B cell (primary cell): ENCODE measurements at regions of chr11 and their contacts with region 1.

Region 1: GRCh38 chr11:62108017-62108750 is 15.6 kb upstream of the INCENP start:
- DNase-seq: peak; percentile 80
- ATAC-seq: peak; percentile 63
- H3K4me3 ChIP-seq: no peak overlapping the region
- H3K4me3 Mint-ChIP-seq: no peak overlapping the region
- H3K27ac ChIP-seq: no peak overlapping the region
- H3K27ac Mint-ChIP-seq: no peak overlapping the region
- H3K4me1 ChIP-seq: peaks cover 0 to 12% of the 10 kb centered on the region in 2 donors
- H3K4me1 Mint-ChIP-seq: peaks cover 9% of the 10 kb centered on the region
- H3K27me3 ChIP-seq: peaks cover 0 to 3% (median under 1%) of the 10 kb centered on the region in 4 experiments
- H3K27me3 Mint-ChIP-seq: no peaks in the 10 kb centered on the region
- CTCF ChIP-seq: peak; percentile 83

Region 2: DNA sequence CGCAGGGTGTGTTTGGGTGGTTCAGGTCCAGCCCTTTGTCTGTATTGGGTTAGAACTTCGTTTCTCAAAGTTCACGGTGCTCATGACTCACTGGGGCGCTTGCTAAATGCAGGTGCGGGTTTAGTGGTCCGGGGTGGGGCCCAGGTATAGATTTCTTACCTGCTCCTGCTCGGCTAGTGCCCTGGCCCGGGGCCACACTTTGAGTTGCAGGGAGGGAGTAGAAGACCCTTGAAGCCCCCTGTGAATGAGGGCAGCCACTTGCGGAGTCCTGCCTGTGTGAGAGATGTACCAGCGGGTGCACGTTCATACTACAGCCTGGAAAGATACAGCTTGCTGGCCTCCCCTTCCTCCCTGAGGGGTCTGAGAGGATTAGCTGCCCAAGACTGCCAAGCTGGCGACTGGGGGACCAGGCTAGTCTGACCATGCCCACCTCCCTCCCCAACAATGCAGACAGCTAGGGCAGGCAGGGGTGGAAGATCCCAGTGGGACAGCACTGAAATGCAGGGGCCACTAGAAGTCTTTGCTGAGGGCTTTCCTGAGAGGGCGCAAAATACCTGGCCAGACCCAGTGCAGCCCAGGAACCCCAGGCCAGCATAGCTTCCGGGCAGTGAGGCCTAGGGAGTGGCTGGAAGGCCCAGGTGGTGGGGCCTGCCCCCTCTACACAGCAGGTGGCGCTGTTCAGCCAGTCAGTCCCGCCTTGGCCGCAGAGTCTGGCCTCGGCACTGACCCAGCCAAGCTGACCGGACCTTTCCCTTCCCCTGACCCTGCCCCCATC is 360.8 kb before region 1 on chr11:
- CTCF ChIA-PET with region 1: interaction called, 69 read pairs
- POLR2A ChIA-PET with region 1: no interaction called
- intact Hi-C with region 1: no loop called
- DNase-seq: peak; percentile 60
- ATAC-seq: peak; percentile 48
- H3K4me3 ChIP-seq: no peak overlapping the region
- H3K4me3 Mint-ChIP-seq: no peak overlapping the region
- H3K27ac ChIP-seq: no peak overlapping the region
- H3K27ac Mint-ChIP-seq: no peak overlapping the region
- H3K4me1 ChIP-seq: peaks cover 4 to 5% of the 10 kb centered on the region in 2 donors
- H3K4me1 Mint-ChIP-seq: peaks cover 2% of the 10 kb centered on the region
- H3K27me3 ChIP-seq: peaks cover 0 to 35% (median 13%) of the 10 kb centered on the region in 4 experiments
- H3K27me3 Mint-ChIP-seq: peaks cover 21% of the 10 kb centered on the region
- CTCF ChIP-seq: peak; percentile 76

Region 3: DNA sequence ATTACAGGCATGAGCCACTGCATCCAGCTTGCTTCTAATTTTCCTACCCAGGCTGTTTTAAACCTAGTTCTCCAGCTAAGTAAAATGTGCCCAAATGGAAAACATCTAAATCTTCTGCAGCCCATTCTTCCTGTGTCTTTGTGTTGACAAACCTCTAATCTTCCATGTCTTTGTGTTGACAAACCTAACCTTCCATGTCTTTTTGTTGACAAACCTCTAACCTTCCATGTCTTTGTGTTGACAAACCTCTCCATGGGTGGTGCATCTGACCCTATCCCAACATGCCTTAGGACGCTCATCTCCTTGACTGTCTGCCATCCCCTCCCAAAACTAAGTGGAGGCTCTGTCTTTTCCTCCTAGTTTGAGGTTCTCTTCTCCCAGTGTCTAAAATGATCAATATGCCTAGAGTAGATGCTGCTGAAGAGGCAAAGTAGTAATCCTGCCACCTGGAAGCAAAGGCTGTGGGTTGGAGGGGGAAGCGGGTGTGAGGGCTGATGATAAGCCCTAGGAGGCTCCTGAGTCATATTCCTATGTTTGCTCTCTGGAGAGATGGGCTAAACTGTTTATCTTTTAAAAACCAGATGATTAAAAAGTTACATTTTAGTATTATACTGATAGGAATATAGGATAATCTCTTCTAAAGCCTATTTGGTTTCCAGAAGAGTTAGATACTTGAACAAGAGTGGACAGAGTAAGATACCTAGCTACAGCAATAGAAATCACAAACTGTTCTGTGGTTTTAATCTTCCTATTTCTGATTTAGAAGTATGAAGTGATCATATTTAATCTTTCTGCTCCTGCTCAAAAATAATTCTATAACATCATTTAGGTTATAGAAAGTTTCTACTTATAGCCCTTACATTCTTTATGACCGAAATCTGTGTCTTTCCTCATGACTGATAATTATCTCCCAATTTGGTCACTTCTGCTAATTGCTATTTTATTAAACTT is 307.6 kb before region 1 on chr11:
- CTCF ChIA-PET with region 1: interaction called, 222 read pairs
- POLR2A ChIA-PET with region 1: no interaction called
- intact Hi-C with region 1: no loop called
- DNase-seq: no peak
- ATAC-seq: no peak
- H3K4me3 ChIP-seq: no peak overlapping the region
- H3K4me3 Mint-ChIP-seq: no peak overlapping the region
- H3K27ac ChIP-seq: no peak overlapping the region
- H3K27ac Mint-ChIP-seq: no peak overlapping the region
- H3K4me1 ChIP-seq: no peaks in the 10 kb centered on the region
- H3K4me1 Mint-ChIP-seq: peaks cover 2% of the 10 kb centered on the region
- H3K27me3 ChIP-seq: no peaks in the 10 kb centered on the region
- H3K27me3 Mint-ChIP-seq: no peaks in the 10 kb centered on the region
- CTCF ChIP-seq: no peak

Region 4: DNA sequence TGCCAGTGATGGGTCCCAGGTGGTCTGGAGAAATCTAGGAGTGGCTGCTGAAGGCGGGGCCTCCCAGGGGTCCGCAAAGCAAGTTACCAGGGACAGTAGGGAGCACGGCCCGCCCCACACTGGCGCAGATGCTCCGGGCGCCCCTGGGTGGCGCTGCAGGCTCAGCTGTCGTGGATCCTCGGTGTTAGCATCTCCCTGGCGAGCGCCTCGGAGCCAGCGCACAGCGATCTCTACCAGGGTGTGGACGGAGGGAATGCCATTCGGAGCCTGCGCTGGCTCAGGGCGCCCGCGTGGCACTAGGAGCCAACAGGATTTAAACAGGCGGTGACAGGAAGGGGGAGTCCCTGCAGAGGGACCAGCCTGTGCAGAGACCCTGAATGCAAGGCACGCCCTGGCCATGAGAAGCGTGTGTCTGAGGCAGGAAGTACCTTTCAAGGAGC is 237.0 kb before region 1 on chr11:
- CTCF ChIA-PET with region 1: interaction called, 114 read pairs
- POLR2A ChIA-PET with region 1: no interaction called
- intact Hi-C with region 1: no loop called
- DNase-seq: peak; percentile 88
- ATAC-seq: peak; percentile 97
- H3K4me3 ChIP-seq: peak overlapping the region in 4 of 5 experiments; percentile 13 to 38 (median 26)
- H3K4me3 Mint-ChIP-seq: peak overlapping the region; percentile 84
- H3K27ac ChIP-seq: no peak overlapping the region
- H3K27ac Mint-ChIP-seq: peak overlapping the region; percentile 83
- H3K4me1 ChIP-seq: peaks cover 9 to 12% of the 10 kb centered on the region in 2 donors
- H3K4me1 Mint-ChIP-seq: peaks cover 8% of the 10 kb centered on the region
- H3K27me3 ChIP-seq: peaks cover 0 to 4% (median 0%) of the 10 kb centered on the region in 4 experiments
- H3K27me3 Mint-ChIP-seq: no peaks in the 10 kb centered on the region
- CTCF ChIP-seq: peak; percentile 98

Region 5: GRCh38 chr11:61899146-61899841 is 208.9 kb before region 1 on chr11:
- CTCF ChIA-PET with region 1: interaction called, 165 read pairs
- POLR2A ChIA-PET with region 1: interaction called, 3 read pairs
- intact Hi-C with region 1: loop called (anchors 1 kb)
- DNase-seq: peak; percentile 96
- ATAC-seq: peak; percentile 96
- H3K4me3 ChIP-seq: no peak overlapping the region
- H3K4me3 Mint-ChIP-seq: peak overlapping the region; percentile 41
- H3K27ac ChIP-seq: peak overlapping the region in 1 of 2 donors; percentile 33
- H3K27ac Mint-ChIP-seq: peak overlapping the region; percentile 85
- H3K4me1 ChIP-seq: peaks cover 21 to 31% of the 10 kb centered on the region in 2 donors
- H3K4me1 Mint-ChIP-seq: peaks cover 26% of the 10 kb centered on the region
- H3K27me3 ChIP-seq: peaks cover 0 to 3% (median 2%) of the 10 kb centered on the region in 4 experiments
- H3K27me3 Mint-ChIP-seq: peaks cover 4% of the 10 kb centered on the region
- CTCF ChIP-seq: peak; percentile 100

Region 6: GRCh38 chr11:61967116-61967923 is 140.9 kb before region 1 on chr11 and contains the start of gene FTH1:
- CTCF ChIA-PET with region 1: interaction called, 10 read pairs
- POLR2A ChIA-PET with region 1: no interaction called
- intact Hi-C with region 1: no loop called
- DNase-seq: peak; percentile 95
- ATAC-seq: peak; percentile 67
- H3K4me3 ChIP-seq: peak within 1 kb of the TSS; percentile 88 to 99 (median 96)
- H3K4me3 Mint-ChIP-seq: peak within 1 kb of the TSS; percentile 97
- H3K27ac ChIP-seq: peak within 1 kb of the TSS; percentile 86 to 94
- H3K27ac Mint-ChIP-seq: peak within 1 kb of the TSS; percentile 99
- H3K4me1 ChIP-seq: peaks cover 58 to 67% of the 10 kb centered on the region in 2 donors
- H3K4me1 Mint-ChIP-seq: peaks cover 72% of the 10 kb centered on the region
- H3K27me3 ChIP-seq: no peaks in the 10 kb centered on the region
- H3K27me3 Mint-ChIP-seq: no peaks in the 10 kb centered on the region
- CTCF ChIP-seq: no peak
- total RNA-seq, gene FTH1: 1,265 and 1,314 TPM in 2 replicates

Region 7: DNA sequence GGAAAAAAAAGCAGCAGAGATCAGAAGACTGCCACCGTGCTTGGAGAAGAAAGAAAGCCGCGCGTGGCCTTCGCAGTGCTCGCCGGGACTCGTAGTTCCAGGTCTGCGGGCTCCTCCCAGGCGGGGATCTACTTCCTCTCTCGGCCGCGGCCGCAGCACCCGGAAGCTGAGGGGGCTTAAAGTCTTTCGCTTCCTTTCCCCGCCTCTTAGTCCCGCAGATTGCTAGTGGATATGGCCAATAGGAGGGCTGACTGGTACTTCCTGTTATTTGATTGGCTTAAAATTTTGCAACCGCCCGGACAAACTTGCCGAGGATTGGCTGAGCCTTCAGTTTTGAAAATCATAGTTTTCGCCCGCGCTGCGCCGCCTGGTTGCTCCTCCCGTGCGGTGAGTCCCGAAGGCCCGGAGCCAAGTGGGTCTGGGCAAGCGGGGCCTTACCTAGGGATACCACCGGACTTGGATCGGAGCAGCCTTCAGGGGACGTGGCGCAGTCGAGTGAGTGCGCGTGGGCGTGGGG is 15.5 kb after region 1 on chr11 and contains the start of gene INCENP:
- CTCF ChIA-PET with region 1: interaction called, 22 read pairs
- POLR2A ChIA-PET with region 1: no interaction called
- intact Hi-C with region 1: loop called (anchors 1 kb)
- DNase-seq: peak; percentile 97
- ATAC-seq: peak; percentile 99
- H3K4me3 ChIP-seq: peak within 1 kb of the TSS; percentile 71 to 99 (median 93)
- H3K4me3 Mint-ChIP-seq: peak within 1 kb of the TSS; percentile 94
- H3K27ac ChIP-seq: peak within 1 kb of the TSS; percentile 52 to 67
- H3K27ac Mint-ChIP-seq: peak within 1 kb of the TSS; percentile 88
- H3K4me1 ChIP-seq: peaks cover 11 to 16% of the 10 kb centered on the region in 2 donors
- H3K4me1 Mint-ChIP-seq: peaks cover 30% of the 10 kb centered on the region
- H3K27me3 ChIP-seq: peaks cover 0 to 2% (median 0%) of the 10 kb centered on the region in 4 experiments
- H3K27me3 Mint-ChIP-seq: no peaks in the 10 kb centered on the region
- CTCF ChIP-seq: no peak
- total RNA-seq, gene INCENP: 34.0 and 37.8 TPM in 2 replicates

Region 8: GRCh38 chr11:62193952-62194351 is 85.8 kb after region 1 on chr11:
- CTCF ChIA-PET with region 1: no interaction called
- POLR2A ChIA-PET with region 1: no interaction called
- intact Hi-C with region 1: no loop called
- DNase-seq: no peak
- ATAC-seq: no peak
- H3K4me3 ChIP-seq: no peak overlapping the region
- H3K4me3 Mint-ChIP-seq: no peak overlapping the region
- H3K27ac ChIP-seq: no peak overlapping the region
- H3K27ac Mint-ChIP-seq: no peak overlapping the region
- H3K4me1 ChIP-seq: no peaks in the 10 kb centered on the region
- H3K4me1 Mint-ChIP-seq: no peaks in the 10 kb centered on the region
- H3K27me3 ChIP-seq: peaks cover 0 to 23% (median 2%) of the 10 kb centered on the region in 4 experiments
- H3K27me3 Mint-ChIP-seq: peaks cover 43% of the 10 kb centered on the region
- CTCF ChIP-seq: no peak

Region 9: GRCh38 chr11:62223095-62223494 is 114.9 kb after region 1 on chr11:
- CTCF ChIA-PET with region 1: no interaction called
- POLR2A ChIA-PET with region 1: no interaction called
- intact Hi-C with region 1: no loop called
- DNase-seq: no peak
- ATAC-seq: no peak
- H3K4me3 ChIP-seq: no peak overlapping the region
- H3K4me3 Mint-ChIP-seq: no peak overlapping the region
- H3K27ac ChIP-seq: no peak overlapping the region
- H3K27ac Mint-ChIP-seq: no peak overlapping the region
- H3K4me1 ChIP-seq: no peaks in the 10 kb centered on the region
- H3K4me1 Mint-ChIP-seq: no peaks in the 10 kb centered on the region
- H3K27me3 ChIP-seq: no peaks in the 10 kb centered on the region
- H3K27me3 Mint-ChIP-seq: peaks cover 13% of the 10 kb centered on the region
- CTCF ChIP-seq: no peak

Region 10: GRCh38 chr11:62245271-62245753 is 137.1 kb after region 1 on chr11:
- CTCF ChIA-PET with region 1: no interaction called
- POLR2A ChIA-PET with region 1: no interaction called
- intact Hi-C with region 1: no loop called
- DNase-seq: no peak
- ATAC-seq: no peak
- H3K4me3 ChIP-seq: no peak overlapping the region
- H3K4me3 Mint-ChIP-seq: no peak overlapping the region
- H3K27ac ChIP-seq: no peak overlapping the region
- H3K27ac Mint-ChIP-seq: no peak overlapping the region
- H3K4me1 ChIP-seq: no peaks in the 10 kb centered on the region
- H3K4me1 Mint-ChIP-seq: no peaks in the 10 kb centered on the region
- H3K27me3 ChIP-seq: peaks cover 0 to 9% (median 1%) of the 10 kb centered on the region in 4 experiments
- H3K27me3 Mint-ChIP-seq: peaks cover 44% of the 10 kb centered on the region
- CTCF ChIP-seq: no peak